Gastrocnemius medialis (tissue), 4 donors: ENCODE measurements at regions of chr17 and their contacts with region 1.

Region 1: DNA sequence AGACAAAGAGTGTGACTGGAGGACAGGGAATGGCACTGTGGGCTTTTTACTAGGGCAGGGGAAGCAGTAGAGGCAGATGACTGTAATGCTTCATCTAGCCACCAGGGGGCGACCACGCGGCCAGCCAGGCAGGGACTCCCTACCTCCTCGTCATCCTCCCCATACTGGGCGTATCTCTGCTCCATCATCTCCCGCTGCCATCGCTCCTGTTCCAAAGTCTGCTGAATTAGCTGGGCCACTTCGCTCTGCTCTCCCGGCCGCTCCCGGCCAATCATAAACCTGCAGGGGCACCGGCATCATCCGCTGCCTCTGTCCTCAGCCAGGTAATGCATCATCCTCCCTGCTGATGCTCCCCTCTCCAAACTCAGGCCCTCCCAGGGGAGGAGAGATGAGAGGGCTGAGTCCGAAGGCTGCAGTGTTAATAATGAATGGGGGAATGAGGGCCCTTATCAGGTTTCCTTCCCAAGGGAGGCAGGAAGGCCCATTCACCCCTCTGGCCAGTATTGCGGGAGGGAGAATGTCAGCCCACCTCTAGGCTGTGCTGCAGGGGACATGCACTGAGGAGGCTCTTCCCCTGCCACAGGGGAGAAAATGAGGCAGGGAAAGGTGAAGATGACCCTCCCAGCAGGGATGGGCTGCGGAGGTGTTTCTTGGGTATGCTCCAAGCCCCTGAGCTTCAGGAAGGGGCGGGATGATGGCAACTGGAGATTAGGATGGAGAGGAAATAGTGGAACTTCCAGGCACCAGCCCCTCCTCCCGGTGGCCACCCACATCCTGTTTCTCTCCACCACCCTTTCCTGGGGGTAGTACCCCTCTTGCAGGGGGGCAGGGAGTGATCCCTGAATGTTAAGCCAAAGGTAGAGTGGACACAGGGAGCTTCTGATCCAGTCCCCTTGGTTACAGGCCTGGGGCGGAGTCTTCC is 10.3 kb upstream of the SAMD14 start:
- DNase-seq: peak; percentile 57 to 78
- ATAC-seq: peak; percentile 71 to 82
- H3K4me3 ChIP-seq: no peak overlapping the region
- H3K27ac ChIP-seq: peak overlapping the region in 3 of 4 donors; percentile 34 to 60 (median 53)
- H3K4me1 ChIP-seq: peaks cover 5 to 19% of the 10 kb centered on the region in 2 donors
- H3K27me3 ChIP-seq: no peaks in the 10 kb centered on the region
- CTCF ChIP-seq: peak; percentile 93 to 98 (median 97)
- POLR2A ChIP-seq: no peak

Region 2: GRCh38 chr17:50161023-50161910 is 21.1 kb after region 1 on chr17:
- in situ Hi-C with region 1: no loop called
- intact Hi-C with region 1: loop called (anchors 1 kb)
- DNase-seq: peak; percentile 81 to 85
- ATAC-seq: peak; percentile 67 to 70
- H3K4me3 ChIP-seq: peak overlapping the region; percentile 52 to 73 (median 62)
- H3K27ac ChIP-seq: peak overlapping the region; percentile 53 to 69 (median 60)
- H3K4me1 ChIP-seq: peaks cover 27 to 39% of the 10 kb centered on the region in 2 donors
- H3K27me3 ChIP-seq: no peaks in the 10 kb centered on the region
- CTCF ChIP-seq: peak; percentile 94 to 97 (median 95)
- POLR2A ChIP-seq: peak; percentile 36 to 38